HEK293 (cell line): ENCODE measurements at regions of chr16 and their contacts with region 1.

Region 1: GRCh38 chr16:19113453-19114351 is at the start of gene ITPRIPL2:
- H3K4me3 ChIP-seq: peak within 1 kb of the TSS; percentile 69
- H3K27ac ChIP-seq: peak within 1 kb of the TSS; percentile 82
- H3K4me1 ChIP-seq: peaks cover 2% of the 10 kb centered on the region; the same call in 1 of the 2 replicates
- CTCF ChIP-seq: 0 out of 2 replicates have a peak, but pooled peaks have one; percentile 32

Region 2: GRCh38 chr16:19130852-19131810 is 17.4 kb after region 1 on chr16:
- CTCF ChIA-PET with region 1: interaction called, 3 read pairs
- POLR2A ChIA-PET with region 1: interaction called, 16 read pairs
- H3K4me3 ChIP-seq: no peak overlapping the region
- H3K27ac ChIP-seq: peak overlapping the region; percentile 6; the same call in 1 of the 2 replicates
- H3K4me1 ChIP-seq: peaks cover 20% of the 10 kb centered on the region
- CTCF ChIP-seq: no peak

Region 3: GRCh38 chr16:19138601-19139000 is 24.9 kb after region 1 on chr16:
- CTCF ChIA-PET with region 1: interaction called, 3 read pairs
- POLR2A ChIA-PET with region 1: interaction called, 16 read pairs
- H3K4me3 ChIP-seq: no peak overlapping the region
- H3K27ac ChIP-seq: peak overlapping the region; percentile 38; the same call in 1 of the 2 replicates
- H3K4me1 ChIP-seq: peaks cover 28% of the 10 kb centered on the region
- CTCF ChIP-seq: no peak

Region 4: DNA sequence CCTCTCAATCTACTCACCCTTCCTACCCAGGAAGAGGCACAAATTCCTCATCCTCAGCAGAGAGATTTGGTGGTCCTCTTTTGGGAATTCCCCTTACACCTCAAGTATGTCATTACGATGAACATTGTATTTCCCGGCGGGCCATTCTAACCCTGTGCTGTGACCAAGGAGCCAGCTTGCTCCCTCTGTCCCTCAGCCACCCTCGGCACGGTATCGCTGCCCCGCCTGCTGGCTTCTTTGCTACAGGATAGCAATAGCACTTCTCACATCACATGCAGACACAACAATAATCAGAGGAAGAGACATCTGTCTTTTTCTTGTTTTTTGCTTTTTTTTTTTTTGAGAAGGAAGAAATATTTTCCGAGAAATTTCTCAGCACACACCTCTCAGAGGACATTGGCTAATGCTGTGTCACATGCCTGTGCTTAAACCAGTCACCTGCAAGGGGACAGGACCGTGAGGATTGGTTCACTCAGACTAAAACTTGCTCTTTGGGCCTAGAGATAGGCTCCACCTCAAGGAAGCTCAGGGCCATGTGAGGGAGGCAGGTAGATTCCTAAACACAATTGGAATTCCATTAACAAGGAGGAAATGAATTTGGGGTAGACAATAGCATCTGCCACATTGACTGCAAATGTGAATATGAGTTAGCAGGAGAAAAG is 345.1 kb after region 1 on chr16:
- CTCF ChIA-PET with region 1: no interaction called
- POLR2A ChIA-PET with region 1: no interaction called
- H3K4me3 ChIP-seq: no peak overlapping the region
- H3K27ac ChIP-seq: no peak overlapping the region
- H3K4me1 ChIP-seq: no peaks in the 10 kb centered on the region
- CTCF ChIP-seq: no peak